Activated CD8-positive, alpha-beta memory T cell treated with anti-CD3 and anti-CD28 coated beads, Interleukin-2, amount 10 ng/mL, durations not matched to agents 7 days and 5 days (primary cell): ENCODE measurements at regions of chr11 and their contacts with region 1.

Region 1: DNA sequence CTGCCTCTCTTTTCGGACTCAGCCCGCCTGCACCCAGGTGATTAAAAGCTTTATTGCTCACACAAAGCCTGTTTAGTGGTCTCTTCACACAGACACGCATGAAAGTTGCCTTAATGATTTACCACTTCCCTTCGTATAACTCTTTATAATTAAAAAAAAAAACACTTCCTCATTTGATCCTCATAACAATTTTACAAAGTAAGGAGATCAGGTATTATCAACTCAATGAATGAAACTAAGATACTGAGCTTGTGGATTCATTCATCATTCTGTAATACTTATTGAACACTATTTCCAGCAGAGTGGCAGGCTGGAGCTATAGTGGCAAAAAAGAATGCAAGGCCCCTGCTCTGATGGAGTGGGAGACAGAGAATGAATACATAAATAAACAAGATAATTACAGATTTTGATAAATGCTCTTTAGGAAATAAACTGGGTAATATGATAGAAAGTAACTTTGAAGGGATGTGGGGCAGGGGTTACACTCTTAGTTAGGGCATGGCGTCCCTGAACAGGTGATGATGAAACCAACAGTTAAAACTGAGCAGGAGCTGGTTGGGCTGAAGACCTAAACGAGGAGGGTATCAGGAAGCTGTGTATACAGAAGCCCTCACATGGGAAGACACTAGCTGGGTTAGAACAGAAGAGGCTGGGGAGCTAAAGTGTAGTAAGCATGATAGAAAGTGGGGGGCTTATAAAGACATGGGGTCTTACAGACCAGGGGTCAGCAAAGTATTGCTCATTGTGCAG is 5.4 kb upstream of the CRTAM start:
- DNase-seq: no peak
- ATAC-seq: no peak
- H3K4me3 Mint-ChIP-seq: no peak overlapping the region
- H3K27ac Mint-ChIP-seq: no peak overlapping the region
- H3K4me1 Mint-ChIP-seq: peaks cover 33% of the 10 kb centered on the region
- H3K27me3 Mint-ChIP-seq: no peaks in the 10 kb centered on the region

Region 2: GRCh38 chr11:122788781-122789535 is 43.9 kb before region 1 on chr11:
- CTCF ChIA-PET with region 1: no interaction called
- DNase-seq: no peak
- ATAC-seq: no peak
- H3K4me3 Mint-ChIP-seq: no peak overlapping the region
- H3K27ac Mint-ChIP-seq: no peak overlapping the region
- H3K4me1 Mint-ChIP-seq: no peaks in the 10 kb centered on the region
- H3K27me3 Mint-ChIP-seq: no peaks in the 10 kb centered on the region

Region 3: DNA sequence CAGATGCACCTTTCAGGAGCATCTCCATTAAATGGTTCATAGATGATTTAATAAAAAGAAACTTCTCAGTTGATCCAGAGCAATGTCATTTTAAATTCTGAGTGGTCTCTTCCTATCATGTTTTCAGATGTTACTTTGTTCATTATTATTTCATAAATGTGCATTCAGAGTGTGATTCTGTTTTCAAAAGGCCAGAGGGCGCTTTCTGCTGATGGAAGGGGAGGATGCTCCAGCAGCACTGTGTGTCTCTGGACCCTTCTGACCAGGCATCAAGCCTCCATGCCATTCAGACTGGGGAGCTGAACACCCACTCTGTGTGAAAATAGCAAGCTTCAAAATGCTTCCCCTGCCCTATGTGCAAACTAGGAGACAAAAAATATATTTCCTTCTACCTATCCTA is 18.5 kb before region 1 on chr11:
- CTCF ChIA-PET with region 1: interaction called, 19 read pairs
- DNase-seq: no peak
- ATAC-seq: peak; percentile 45
- H3K4me3 Mint-ChIP-seq: no peak overlapping the region
- H3K27ac Mint-ChIP-seq: no peak overlapping the region
- H3K4me1 Mint-ChIP-seq: peaks cover 11% of the 10 kb centered on the region
- H3K27me3 Mint-ChIP-seq: no peaks in the 10 kb centered on the region

Region 4: DNA sequence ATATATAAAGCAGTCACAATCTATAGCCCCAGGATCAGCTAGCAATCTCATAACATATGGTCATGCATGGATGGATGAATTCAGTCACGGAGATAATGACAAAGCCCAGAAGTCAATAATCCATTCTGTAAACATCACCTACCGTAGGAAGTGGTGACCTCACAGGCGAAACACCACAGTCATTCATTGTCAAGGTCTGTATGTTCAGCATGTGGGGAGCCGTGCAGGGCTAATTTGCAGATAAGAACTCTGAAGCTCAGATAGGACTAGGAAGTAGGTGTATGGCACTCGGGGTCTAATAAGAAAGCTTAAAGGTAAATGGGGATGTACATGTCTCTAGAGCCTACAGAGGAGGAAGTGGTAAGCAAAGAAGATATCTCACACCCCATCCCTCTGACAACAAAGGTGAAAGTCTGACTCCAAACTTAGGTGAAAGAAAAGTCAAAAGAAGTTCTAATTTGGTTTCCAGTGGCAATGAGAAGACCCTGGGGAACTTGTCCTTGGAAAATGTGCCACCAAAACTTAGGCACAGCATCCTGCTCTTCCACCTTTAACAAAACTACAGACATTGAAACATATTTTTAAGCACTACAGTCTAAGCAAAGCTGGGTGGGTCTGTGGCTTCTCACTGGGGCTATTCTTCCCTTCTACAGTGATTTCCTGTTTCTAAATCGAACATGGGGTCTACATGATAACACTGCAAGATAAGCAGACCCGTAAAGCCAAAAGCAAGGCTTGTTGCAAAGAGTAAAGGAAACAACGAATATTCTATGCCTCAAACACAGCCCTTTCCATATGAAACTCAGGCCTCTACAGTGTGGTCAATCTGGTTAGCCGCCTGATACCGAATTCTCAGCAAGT is 10.6 kb after region 1 on chr11:
- CTCF ChIA-PET with region 1: interaction called, 10 read pairs
- DNase-seq: peak; percentile 88
- ATAC-seq: peak; percentile 77
- H3K4me3 Mint-ChIP-seq: peak overlapping the region; percentile 62
- H3K27ac Mint-ChIP-seq: peak overlapping the region; percentile 97
- H3K4me1 Mint-ChIP-seq: peaks cover 79% of the 10 kb centered on the region
- H3K27me3 Mint-ChIP-seq: no peaks in the 10 kb centered on the region